ENCODE measurements at regions of chr17 and their contacts with region 1.

Region 1: GRCh38 chr17:12667299-12667958 is 1.7 kb downstream of the MYOCD start:
- DNase-seq: peak in 4 of 5 donors; percentile 34 to 56 (median 48)
- ATAC-seq: peak; percentile 62 to 81 (median 72)
- H3K4me3 ChIP-seq: peak overlapping the region; percentile 47 to 81 (median 64)
- H3K27ac ChIP-seq: peak overlapping the region; percentile 51 to 91 (median 80)
- H3K4me1 ChIP-seq: peaks cover 0 to 33% (median 5%) of the 10 kb centered on the region in 12 donors
- H3K27me3 ChIP-seq: peaks cover 0 to 37% (median 5%) of the 10 kb centered on the region in 9 donors
- CTCF ChIP-seq: peak in 11 of 12 donors; percentile 7 to 64 (median 45)
- POLR2A ChIP-seq: peak in 1 of 2 donors; percentile 7

Region 2: GRCh38 chr17:12180644-12181261 is 486.7 kb before region 1 on chr17:
- intact Hi-C with region 1: loop called in 5 of 10 experiments (anchors 2 to 5 kb)
- DNase-seq: peak in 1 of 5 donors; percentile 10
- ATAC-seq: peak in 2 of 4 donors; percentile 42 to 63
- H3K4me3 ChIP-seq: no peak overlapping the region
- H3K27ac ChIP-seq: no peak overlapping the region
- H3K4me1 ChIP-seq: peaks cover 0 to 7% (median 0%) of the 10 kb centered on the region in 12 donors
- H3K27me3 ChIP-seq: no peaks in the 10 kb centered on the region
- CTCF ChIP-seq: peak; percentile 51 to 79 (median 68)
- POLR2A ChIP-seq: no peak

Region 3: GRCh38 chr17:12545877-12546513 is 121.4 kb before region 1 on chr17:
- intact Hi-C with region 1: loop called (anchors 1 to 5 kb)
- DNase-seq: peak in 3 of 5 donors; percentile 28 to 47 (median 30)
- ATAC-seq: peak in 3 of 4 donors; percentile 77 to 88 (median 80)
- H3K4me3 ChIP-seq: no peak overlapping the region
- H3K27ac ChIP-seq: no peak overlapping the region
- H3K4me1 ChIP-seq: peaks cover 0 to 10% (median 0%) of the 10 kb centered on the region in 12 donors
- H3K27me3 ChIP-seq: no peaks in the 10 kb centered on the region
- CTCF ChIP-seq: peak; percentile 51 to 79 (median 70)
- POLR2A ChIP-seq: no peak

Region 4: GRCh38 chr17:12744298-12744697 is 76.9 kb after region 1 on chr17:
- intact Hi-C with region 1: loop called in 5 of 10 experiments (anchors 2 to 5 kb)
- DNase-seq: peak in 4 of 5 donors; percentile 64 to 86 (median 73)
- ATAC-seq: peak; percentile 92 to 95 (median 94)
- H3K4me3 ChIP-seq: peak overlapping the region in 7 of 12 donors; percentile 16 to 46 (median 38)
- H3K27ac ChIP-seq: peak overlapping the region; percentile 44 to 88 (median 74)
- H3K4me1 ChIP-seq: peaks cover 0 to 30% (median 6%) of the 10 kb centered on the region in 12 donors
- H3K27me3 ChIP-seq: no peaks in the 10 kb centered on the region
- CTCF ChIP-seq: no peak
- POLR2A ChIP-seq: peak in 1 of 2 donors; percentile 27

Region 5: DNA sequence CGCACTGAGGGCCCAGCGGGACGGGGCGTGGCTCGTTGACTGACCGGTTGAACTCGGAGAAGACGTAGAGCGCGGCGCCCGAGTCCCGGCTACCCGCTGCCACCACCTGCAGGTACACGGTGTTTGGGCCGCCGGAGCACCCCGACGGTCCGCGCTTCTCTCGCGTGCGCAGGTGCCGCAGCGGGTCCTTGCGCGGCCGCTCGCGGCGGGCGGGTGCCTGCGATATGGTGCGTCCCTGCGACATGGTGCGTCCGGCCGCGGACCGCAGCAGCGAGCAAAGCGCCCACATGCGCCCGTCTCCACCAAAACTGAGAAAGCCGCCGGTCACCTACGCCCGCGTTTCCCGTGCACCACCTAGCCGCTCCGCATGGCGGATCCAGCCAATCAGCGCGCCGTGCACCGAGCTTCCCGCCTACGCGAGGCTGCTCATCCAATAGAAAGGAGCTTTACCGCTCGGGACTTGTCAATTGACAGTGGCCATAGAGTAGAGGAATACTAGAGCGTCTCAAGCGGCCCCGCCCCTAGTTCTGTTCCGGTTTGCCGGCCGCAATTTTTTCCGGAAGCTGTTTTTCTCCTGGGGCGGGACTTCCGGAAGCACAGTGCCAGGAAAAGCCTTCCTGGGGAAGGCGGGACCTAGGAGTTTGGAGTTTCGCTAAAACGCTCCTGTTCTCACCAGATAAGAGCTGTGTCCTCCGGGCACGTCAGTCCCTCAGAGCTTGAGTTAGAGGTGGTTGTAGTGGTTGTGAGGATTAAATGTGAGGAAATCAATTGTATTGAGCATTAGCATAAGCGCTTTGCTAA is 350.4 kb after region 1 on chr17 and contains the start of gene ELAC2:
- intact Hi-C with region 1: loop called in 1 of 10 experiments (anchors 5 kb)
- DNase-seq: peak; percentile 97 to 98 (median 98)
- ATAC-seq: peak; percentile 99 to 100 (median 99)
- H3K4me3 ChIP-seq: peak within 1 kb of the TSS; percentile 54 to 97 (median 86)
- H3K27ac ChIP-seq: peak within 1 kb of the TSS; percentile 56 to 95 (median 84)
- H3K4me1 ChIP-seq: peaks cover 0 to 22% (median 11%) of the 10 kb centered on the region in 12 donors
- H3K27me3 ChIP-seq: no peaks in the 10 kb centered on the region
- CTCF ChIP-seq: peak in 2 of 12 donors; percentile 8 to 13
- POLR2A ChIP-seq: peak in 1 of 2 donors; percentile 56
- total RNA-seq, gene ELAC2: 48.6 to 114 (median 68.3) TPM

Measured in heart left ventricle (tissue), 16 donors.